ENCODE measurements at regions of chr22 and their contacts with region 1.

Region 1: GRCh38 chr22:18095101-18095805 is 15.4 kb upstream of the TUBA8 start:
- DNase-seq: no peak
- H3K4me3 ChIP-seq: no peak overlapping the region
- H3K27ac ChIP-seq: no peak overlapping the region
- H3K4me1 ChIP-seq: no peaks in the 10 kb centered on the region
- H3K27me3 ChIP-seq: no peaks in the 10 kb centered on the region
- CTCF ChIP-seq: no peak

Region 2: GRCh38 chr22:18144105-18144504 is 48.9 kb after region 1 on chr22:
- CTCF ChIA-PET with region 1: no interaction called
- POLR2A ChIA-PET with region 1: no interaction called
- intact Hi-C with region 1: loop called (anchors 5 kb)
- DNase-seq: no peak
- H3K4me3 ChIP-seq: no peak overlapping the region
- H3K27ac ChIP-seq: no peak overlapping the region
- H3K4me1 ChIP-seq: no peaks in the 10 kb centered on the region
- H3K27me3 ChIP-seq: no peaks in the 10 kb centered on the region
- CTCF ChIP-seq: no peak

Measured in PC-9 (cell line).